ENCODE measurements at regions of chr6 and their contacts with region 1.

Region 1: DNA sequence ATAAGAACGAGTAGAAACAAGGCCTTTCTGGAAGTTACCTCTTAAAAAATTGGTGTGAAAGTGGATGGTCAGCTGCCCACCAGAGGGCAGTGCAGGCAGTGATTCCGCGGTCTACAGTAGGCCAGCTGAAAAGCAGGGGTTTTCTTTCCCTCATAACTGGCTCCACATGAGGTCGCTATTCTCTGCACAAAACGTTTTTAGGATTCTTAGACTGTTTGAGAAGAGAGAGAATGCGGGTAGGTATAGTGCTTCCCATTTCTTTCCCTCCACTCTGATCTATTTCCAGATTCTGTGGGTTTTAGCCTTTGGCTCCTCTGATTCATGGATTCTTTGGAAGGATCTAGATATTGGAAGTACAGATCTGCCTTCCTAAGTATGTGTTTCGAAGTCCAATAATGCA is 14.2 kb downstream of the FIG4 start:
- DNase-seq: peak; percentile 38 to 79 (median 66)
- H3K4me3 ChIP-seq: no peak overlapping the region
- H3K4me3 Mint-ChIP-seq: no peak overlapping the region
- H3K27ac ChIP-seq: no peak overlapping the region
- H3K27ac Mint-ChIP-seq: peak overlapping the region in 2 of 8 donors; percentile 12 to 37
- H3K4me1 ChIP-seq: no peaks in the 10 kb centered on the region
- H3K4me1 Mint-ChIP-seq: peaks cover 24 to 32% (median 24%) of the 10 kb centered on the region in 3 donors
- H3K27me3 ChIP-seq: no peaks in the 10 kb centered on the region
- H3K27me3 Mint-ChIP-seq: no peaks in the 10 kb centered on the region

Region 2: DNA sequence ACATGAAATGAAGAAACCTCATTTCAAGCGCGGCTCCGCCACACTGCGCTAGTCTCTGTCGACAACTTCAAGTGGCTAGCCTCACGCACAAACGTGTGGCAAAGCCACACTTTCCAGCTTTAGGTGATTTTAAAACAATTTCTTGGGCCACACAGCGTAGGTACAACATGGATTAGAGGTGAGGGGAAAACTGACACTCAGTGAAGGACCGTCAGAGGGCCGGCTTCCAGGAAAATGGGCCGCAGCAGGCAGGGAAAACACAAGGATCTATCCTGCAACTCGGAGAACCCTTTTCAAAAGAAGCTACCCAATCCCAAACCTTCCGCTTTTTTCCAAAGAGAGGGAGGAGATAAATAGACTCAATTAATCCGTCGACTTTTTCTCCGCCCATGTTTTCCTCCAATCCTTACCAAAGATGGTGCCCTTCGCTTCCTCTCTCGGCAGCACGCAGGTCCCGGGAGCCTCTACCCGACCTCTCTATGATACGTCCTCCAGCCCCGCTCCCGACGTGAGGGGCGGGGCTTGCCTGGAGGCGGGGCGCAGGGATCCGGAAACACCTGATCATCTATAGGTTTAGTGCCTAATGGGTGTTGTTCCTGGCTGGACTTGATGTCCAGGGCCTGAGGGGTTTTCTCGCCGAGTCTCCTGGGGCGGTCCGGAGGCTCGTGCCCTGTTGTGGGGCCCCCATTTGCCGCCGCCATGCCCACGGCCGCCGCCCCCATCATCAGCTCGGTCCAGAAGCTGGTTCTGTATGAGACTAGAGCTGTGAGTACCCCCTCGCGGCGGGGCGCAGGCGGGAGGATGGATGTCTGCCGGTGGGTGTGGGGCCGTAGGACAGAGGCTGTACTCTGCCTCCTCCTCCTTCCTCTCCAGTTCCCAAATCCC is 14.3 kb before region 1 on chr6 and contains the starts of genes AK9 and FIG4:
- CTCF ChIA-PET with region 1: interaction called, 12 read pairs
- POLR2A ChIA-PET with region 1: interaction called, 3 read pairs
- DNase-seq: peak; percentile 80 to 90 (median 85)
- H3K4me3 ChIP-seq: peak within 1 kb of the TSS; percentile 97
- H3K4me3 Mint-ChIP-seq: peak within 1 kb of the TSS; percentile 91 to 97 (median 93)
- H3K27ac ChIP-seq: peak within 1 kb of the TSS; percentile 81
- H3K27ac Mint-ChIP-seq: peak within 1 kb of the TSS; percentile 72 to 98 (median 96)
- H3K4me1 ChIP-seq: peaks cover 11% of the 10 kb centered on the region
- H3K4me1 Mint-ChIP-seq: peaks cover 21 to 46% (median 35%) of the 10 kb centered on the region in 3 donors
- H3K27me3 ChIP-seq: no peaks in the 10 kb centered on the region
- H3K27me3 Mint-ChIP-seq: no peaks in the 10 kb centered on the region
- total RNA-seq, gene AK9: 5.1 to 5.6 TPM
- total RNA-seq, gene FIG4: 11.2 to 13.2 TPM

Region 3: GRCh38 chr6:109877028-109878006 is 172.1 kb after region 1 on chr6:
- CTCF ChIA-PET with region 1: no interaction called
- POLR2A ChIA-PET with region 1: no interaction called
- DNase-seq: no peak
- H3K4me3 ChIP-seq: no peak overlapping the region
- H3K4me3 Mint-ChIP-seq: no peak overlapping the region
- H3K27ac ChIP-seq: no peak overlapping the region
- H3K27ac Mint-ChIP-seq: no peak overlapping the region
- H3K4me1 ChIP-seq: no peaks in the 10 kb centered on the region
- H3K4me1 Mint-ChIP-seq: no peaks in the 10 kb centered on the region
- H3K27me3 ChIP-seq: no peaks in the 10 kb centered on the region
- H3K27me3 Mint-ChIP-seq: peaks cover 7 to 30% of the 10 kb centered on the region in 2 donors

Region 4: GRCh38 chr6:110114004-110114403 is 408.7 kb after region 1 on chr6:
- CTCF ChIA-PET with region 1: no interaction called
- POLR2A ChIA-PET with region 1: no interaction called
- DNase-seq: no peak
- H3K4me3 ChIP-seq: no peak overlapping the region
- H3K4me3 Mint-ChIP-seq: no peak overlapping the region
- H3K27ac ChIP-seq: no peak overlapping the region
- H3K27ac Mint-ChIP-seq: no peak overlapping the region
- H3K4me1 ChIP-seq: no peaks in the 10 kb centered on the region
- H3K4me1 Mint-ChIP-seq: no peaks in the 10 kb centered on the region
- H3K27me3 ChIP-seq: no peaks in the 10 kb centered on the region
- H3K27me3 Mint-ChIP-seq: peaks cover 12 to 32% of the 10 kb centered on the region in 2 donors

Region 5: GRCh38 chr6:110389689-110390382 is 684.6 kb after region 1 on chr6:
- CTCF ChIA-PET with region 1: interaction called, 14 read pairs
- POLR2A ChIA-PET with region 1: no interaction called
- DNase-seq: no peak
- H3K4me3 ChIP-seq: no peak overlapping the region
- H3K4me3 Mint-ChIP-seq: peak overlapping the region in 2 of 7 donors; percentile 49 to 50
- H3K27ac ChIP-seq: no peak overlapping the region
- H3K27ac Mint-ChIP-seq: peak overlapping the region in 7 of 8 donors; percentile 21 to 82 (median 54)
- H3K4me1 ChIP-seq: peaks cover 11% of the 10 kb centered on the region
- H3K4me1 Mint-ChIP-seq: peaks cover 16 to 23% (median 18%) of the 10 kb centered on the region in 3 donors
- H3K27me3 ChIP-seq: no peaks in the 10 kb centered on the region
- H3K27me3 Mint-ChIP-seq: peaks cover 0 to 1% of the 10 kb centered on the region in 2 donors

Measured in CD8-positive, alpha-beta memory T cell (primary cell).